ENCODE measurements at regions of chr16 and their contacts with region 1.

Region 1: GRCh38 chr16:66608241-66609138 is 4.0 kb downstream of the CMTM3 start:
- DNase-seq: peak; percentile 92
- ATAC-seq: peak; percentile 31
- H3K4me3 Mint-ChIP-seq: no peak overlapping the region
- H3K27ac Mint-ChIP-seq: peak overlapping the region; percentile 71
- H3K4me1 Mint-ChIP-seq: peaks cover 35% of the 10 kb centered on the region
- H3K27me3 Mint-ChIP-seq: no peaks in the 10 kb centered on the region
- CTCF ChIP-seq: peak; percentile 85

Region 2: GRCh38 chr16:66406534-66407221 is 201.8 kb before region 1 on chr16:
- CTCF ChIA-PET with region 1: interaction called, 25 read pairs
- POLR2A ChIA-PET with region 1: no interaction called
- intact Hi-C with region 1: loop called (anchors 5 kb)
- DNase-seq: peak; percentile 94
- ATAC-seq: peak; percentile 82
- H3K4me3 Mint-ChIP-seq: peak overlapping the region; percentile 81
- H3K27ac Mint-ChIP-seq: peak overlapping the region; percentile 67
- H3K4me1 Mint-ChIP-seq: peaks cover 23% of the 10 kb centered on the region
- H3K27me3 Mint-ChIP-seq: peaks cover 8% of the 10 kb centered on the region
- CTCF ChIP-seq: peak; percentile 85

Region 3: DNA sequence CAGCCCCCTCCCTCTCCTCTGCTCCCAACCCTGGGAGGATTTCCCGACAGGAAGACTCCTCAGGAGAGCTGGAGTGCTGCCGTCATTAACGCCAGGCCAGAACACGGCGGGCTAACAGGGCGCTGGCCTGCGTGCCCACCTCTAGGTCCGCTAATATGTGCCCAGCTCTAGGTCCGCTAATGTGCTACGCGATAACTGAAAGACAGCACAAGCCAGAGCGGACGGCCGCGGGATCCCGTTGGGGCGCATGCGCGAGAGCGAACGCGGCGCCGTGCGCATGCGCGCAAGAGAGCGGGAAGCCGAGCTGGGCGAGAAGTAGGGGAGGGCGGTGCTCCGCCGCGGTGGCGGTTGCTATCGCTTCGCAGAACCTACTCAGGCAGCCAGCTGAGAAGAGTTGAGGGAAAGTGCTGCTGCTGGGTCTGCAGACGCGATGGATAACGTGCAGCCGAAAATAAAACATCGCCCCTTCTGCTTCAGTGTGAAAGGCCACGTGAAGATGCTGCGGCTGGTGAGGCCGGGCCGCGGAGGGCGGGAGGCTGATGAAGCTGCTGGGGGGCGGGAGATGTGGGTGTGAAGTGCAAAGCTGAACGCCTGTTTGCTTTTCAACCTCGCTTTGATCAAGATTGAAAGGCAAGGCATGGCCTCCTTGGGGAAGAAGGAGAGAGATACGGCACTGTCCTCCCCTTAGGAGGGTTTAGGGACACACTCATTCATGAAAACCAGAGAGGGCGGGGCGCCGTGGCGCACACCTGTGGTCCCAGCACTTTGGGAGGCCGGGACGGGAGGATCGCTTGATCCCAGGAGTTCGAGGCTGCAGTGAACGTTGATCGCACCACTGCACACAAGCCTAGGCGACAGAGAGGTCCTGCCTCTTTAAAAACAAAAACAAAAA is 56.0 kb before region 1 on chr16 and contains the start of gene CKLF:
- CTCF ChIA-PET with region 1: interaction called, 9 read pairs
- POLR2A ChIA-PET with region 1: interaction called, 13 read pairs
- intact Hi-C with region 1: loop called (anchors 5 kb)
- DNase-seq: peak; percentile 90
- ATAC-seq: peak; percentile 76
- H3K4me3 Mint-ChIP-seq: peak within 1 kb of the TSS; percentile 88
- H3K27ac Mint-ChIP-seq: peak within 1 kb of the TSS; percentile 92
- H3K4me1 Mint-ChIP-seq: peaks cover 63% of the 10 kb centered on the region
- H3K27me3 Mint-ChIP-seq: no peaks in the 10 kb centered on the region
- CTCF ChIP-seq: no peak
- total RNA-seq, gene CKLF: 99.0 to 99.7 TPM

Region 4: GRCh38 chr16:66569827-66570405 is 38.6 kb before region 1 on chr16:
- CTCF ChIA-PET with region 1: interaction called, 10 read pairs
- POLR2A ChIA-PET with region 1: interaction called, 3 read pairs
- intact Hi-C with region 1: no loop called
- DNase-seq: no peak
- ATAC-seq: no peak
- H3K4me3 Mint-ChIP-seq: no peak overlapping the region
- H3K27ac Mint-ChIP-seq: no peak overlapping the region
- H3K4me1 Mint-ChIP-seq: peaks cover 16% of the 10 kb centered on the region
- H3K27me3 Mint-ChIP-seq: no peaks in the 10 kb centered on the region
- CTCF ChIP-seq: no peak

Region 5: GRCh38 chr16:66596986-66597848 is 11.3 kb before region 1 on chr16:
- CTCF ChIA-PET with region 1: interaction called, 16 read pairs
- POLR2A ChIA-PET with region 1: interaction called, 3 read pairs
- intact Hi-C with region 1: no loop called
- DNase-seq: peak; percentile 41
- ATAC-seq: peak; percentile 63
- H3K4me3 Mint-ChIP-seq: peak overlapping the region; percentile 16
- H3K27ac Mint-ChIP-seq: peak overlapping the region; percentile 79
- H3K4me1 Mint-ChIP-seq: peaks cover 33% of the 10 kb centered on the region
- H3K27me3 Mint-ChIP-seq: no peaks in the 10 kb centered on the region
- CTCF ChIP-seq: no peak

Region 6: DNA sequence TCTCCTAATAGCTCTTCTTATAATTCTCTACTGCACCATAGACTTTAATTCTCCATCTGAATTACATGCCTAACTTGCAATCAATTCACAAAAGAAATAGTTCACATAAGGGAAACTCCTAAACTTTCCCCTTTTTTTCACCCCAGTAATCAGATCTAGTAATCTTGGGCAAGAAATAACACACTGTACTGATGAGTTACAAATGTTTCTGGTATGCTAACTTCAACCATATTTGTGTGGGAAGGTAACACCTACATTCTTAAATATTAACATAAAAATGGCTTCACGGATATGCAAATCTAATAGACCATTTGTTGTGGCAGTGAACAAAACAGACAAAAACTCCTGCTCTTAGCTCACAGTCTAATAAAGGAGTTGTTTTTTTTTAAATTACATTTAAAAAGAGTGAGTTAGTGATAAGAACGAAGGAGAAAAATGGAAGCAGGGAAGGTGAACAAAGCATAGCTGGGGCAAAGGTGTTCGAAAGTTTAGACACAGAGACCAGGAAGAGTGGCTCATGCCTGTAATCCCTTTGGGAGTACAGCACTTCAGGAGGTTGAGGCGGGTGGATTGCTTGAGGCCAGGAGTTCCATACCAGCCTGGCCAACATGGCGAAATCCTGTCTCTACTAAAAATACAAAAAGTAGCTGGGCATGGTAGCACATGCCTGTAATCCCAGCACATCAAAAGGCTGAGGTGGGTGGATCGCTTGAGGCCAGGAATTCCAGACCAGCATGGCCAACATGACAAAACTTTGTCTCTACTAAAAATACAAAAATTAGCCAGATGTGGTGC is 30.8 kb after region 1 on chr16:
- CTCF ChIA-PET with region 1: interaction called, 10 read pairs
- POLR2A ChIA-PET with region 1: no interaction called
- intact Hi-C with region 1: no loop called
- DNase-seq: no peak
- ATAC-seq: no peak
- H3K4me3 Mint-ChIP-seq: no peak overlapping the region
- H3K27ac Mint-ChIP-seq: no peak overlapping the region
- H3K4me1 Mint-ChIP-seq: no peaks in the 10 kb centered on the region
- H3K27me3 Mint-ChIP-seq: peaks cover 2% of the 10 kb centered on the region
- CTCF ChIP-seq: no peak

Region 7: GRCh38 chr16:66670691-66671388 is 62.4 kb after region 1 on chr16:
- CTCF ChIA-PET with region 1: no interaction called
- POLR2A ChIA-PET with region 1: no interaction called
- intact Hi-C with region 1: no loop called
- DNase-seq: no peak
- ATAC-seq: no peak
- H3K4me3 Mint-ChIP-seq: no peak overlapping the region
- H3K27ac Mint-ChIP-seq: no peak overlapping the region
- H3K4me1 Mint-ChIP-seq: no peaks in the 10 kb centered on the region
- H3K27me3 Mint-ChIP-seq: no peaks in the 10 kb centered on the region
- CTCF ChIP-seq: no peak

Region 8: GRCh38 chr16:66728117-66728787 is 119.8 kb after region 1 on chr16:
- CTCF ChIA-PET with region 1: interaction called, 12 read pairs
- POLR2A ChIA-PET with region 1: no interaction called
- intact Hi-C with region 1: no loop called
- DNase-seq: no peak
- ATAC-seq: peak; percentile 80
- H3K4me3 Mint-ChIP-seq: no peak overlapping the region
- H3K27ac Mint-ChIP-seq: peak overlapping the region; percentile 65
- H3K4me1 Mint-ChIP-seq: peaks cover 4% of the 10 kb centered on the region
- H3K27me3 Mint-ChIP-seq: no peaks in the 10 kb centered on the region
- CTCF ChIP-seq: peak; percentile 72